ENCODE measurements at regions of chr6 and their contacts with region 1.

Region 1: GRCh38 chr6:28136585-28137504 is 4.8 kb upstream of the ZKSCAN8 start:
- DNase-seq: peak; percentile 90
- H3K4me3 ChIP-seq: peak overlapping the region; percentile 54 to 95 (median 90)
- H3K27ac ChIP-seq: peak overlapping the region; percentile 93
- H3K4me1 ChIP-seq: peaks cover 25% of the 10 kb centered on the region
- H3K27me3 ChIP-seq: no peaks in the 10 kb centered on the region
- CTCF ChIP-seq: no peak
- POLR2A ChIP-seq: peak; percentile 65

Region 2: GRCh38 chr6:27879837-27880236 is 257.0 kb before region 1 on chr6:
- CTCF ChIA-PET with region 1: no interaction called
- POLR2A ChIA-PET with region 1: no interaction called
- dilution Hi-C with region 1: no loop called
- intact Hi-C with region 1: no loop called
- DNase-seq: no peak
- H3K4me3 ChIP-seq: no peak overlapping the region
- H3K27ac ChIP-seq: no peak overlapping the region
- H3K4me1 ChIP-seq: no peaks in the 10 kb centered on the region
- H3K27me3 ChIP-seq: no peaks in the 10 kb centered on the region
- CTCF ChIP-seq: no peak
- POLR2A ChIP-seq: no peak

Region 3: GRCh38 chr6:27902335-27903314 is 234.2 kb before region 1 on chr6:
- CTCF ChIA-PET with region 1: no interaction called
- POLR2A ChIA-PET with region 1: no interaction called
- dilution Hi-C with region 1: no loop called
- intact Hi-C with region 1: loop called (anchors 2 kb)
- DNase-seq: peak; percentile 92
- H3K4me3 ChIP-seq: peak overlapping the region; percentile 39 to 91 (median 86)
- H3K27ac ChIP-seq: peak overlapping the region; percentile 37
- H3K4me1 ChIP-seq: no peaks in the 10 kb centered on the region
- H3K27me3 ChIP-seq: peaks cover 0 to 11% of the 10 kb centered on the region in 2 experiments
- CTCF ChIP-seq: no peak
- POLR2A ChIP-seq: no peak

Region 4: DNA sequence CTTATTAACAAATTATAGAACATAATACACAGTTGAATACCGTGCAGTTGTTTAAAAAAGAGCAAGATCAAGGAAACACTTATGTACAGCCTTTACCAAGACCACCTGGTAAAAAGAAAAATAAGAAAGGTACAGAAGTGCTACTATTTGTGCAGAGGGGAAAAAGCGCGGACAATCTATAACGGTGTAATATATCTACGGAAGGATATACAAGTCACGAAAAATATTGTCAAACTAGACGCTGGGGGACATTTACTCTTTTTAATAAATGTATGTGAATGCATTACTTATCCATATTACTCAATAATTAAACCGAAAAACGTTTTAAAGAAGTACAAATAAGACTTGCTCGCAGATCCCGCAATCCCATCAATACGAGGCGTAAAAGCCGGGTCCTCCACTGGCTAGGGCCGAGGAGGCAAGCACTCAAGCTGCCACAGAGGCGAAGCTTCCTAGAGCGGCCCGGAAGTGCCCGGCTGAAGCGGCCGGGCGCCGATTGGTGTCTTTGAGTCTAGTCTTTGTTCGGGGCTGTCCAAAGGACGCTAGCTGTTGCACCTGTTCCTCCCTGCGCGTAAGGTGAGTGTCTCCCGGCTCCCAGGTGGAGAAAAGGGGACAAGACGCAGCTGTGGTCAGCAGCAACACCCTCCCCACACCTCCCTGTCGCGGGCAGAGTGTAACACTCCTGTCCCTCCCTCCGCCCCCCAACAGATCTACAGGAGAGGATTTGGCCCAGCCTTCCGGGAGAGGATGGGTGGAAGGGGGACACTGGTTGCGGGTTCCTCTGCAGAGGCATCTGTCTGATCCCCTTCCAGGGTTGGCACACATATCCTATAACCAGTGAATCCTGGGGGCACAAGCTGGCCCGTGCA is 12.5 kb before region 1 on chr6 and contains the start of gene ZSCAN16:
- CTCF ChIA-PET with region 1: interaction called, 8 read pairs
- POLR2A ChIA-PET with region 1: interaction called, 9 read pairs
- dilution Hi-C with region 1: no loop called
- intact Hi-C with region 1: loop called (anchors 1 kb)
- DNase-seq: peak; percentile 84
- H3K4me3 ChIP-seq: peak within 1 kb of the TSS; percentile 58 to 91 (median 77)
- H3K27ac ChIP-seq: peak within 1 kb of the TSS; percentile 46
- H3K4me1 ChIP-seq: peaks cover 11% of the 10 kb centered on the region
- H3K27me3 ChIP-seq: no peaks in the 10 kb centered on the region
- CTCF ChIP-seq: no peak
- POLR2A ChIP-seq: peak; percentile 92
- total RNA-seq, gene ZSCAN16: 7.7 and 8.9 TPM in 2 replicates

Region 5: DNA sequence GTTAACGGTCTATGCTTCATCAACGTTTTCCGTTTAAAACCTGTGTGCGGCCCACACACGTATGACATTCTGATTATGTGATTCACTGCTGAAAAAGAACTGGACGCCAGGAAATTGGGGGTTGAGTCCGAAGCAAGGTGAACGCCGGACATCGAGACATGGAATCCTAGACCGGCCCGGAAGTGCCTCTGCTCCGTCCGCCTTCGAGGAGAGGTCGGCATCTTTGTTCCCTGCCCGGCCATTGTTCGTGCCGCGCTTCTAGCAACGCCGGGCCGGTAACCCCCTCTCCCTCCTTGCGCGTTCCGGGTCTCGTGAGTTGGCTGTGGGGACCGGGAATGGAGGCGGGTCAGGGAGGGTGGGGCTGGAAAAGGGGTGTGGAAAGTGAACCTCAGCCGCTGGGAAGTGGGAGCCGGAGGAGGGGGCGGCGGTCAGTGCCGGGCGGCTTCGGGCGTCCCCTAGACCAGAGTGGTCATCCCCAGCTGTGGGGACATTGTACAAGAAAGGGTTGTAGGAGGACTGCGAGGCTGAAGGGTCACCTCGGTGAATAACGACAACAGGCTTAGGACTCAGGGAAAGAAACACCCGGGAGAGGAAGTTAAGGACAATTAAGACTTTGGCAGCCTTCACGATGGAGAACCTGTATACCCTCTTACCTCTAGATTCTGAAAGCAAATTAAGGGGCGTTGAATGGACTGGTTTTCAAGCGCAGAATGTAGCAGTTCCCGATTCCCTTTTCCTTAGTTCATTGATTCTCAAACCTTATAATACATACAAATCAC is 88.4 kb after region 1 on chr6 and contains the start of gene ZSCAN9:
- CTCF ChIA-PET with region 1: interaction called, 4 read pairs
- POLR2A ChIA-PET with region 1: interaction called, 3 read pairs
- dilution Hi-C with region 1: no loop called
- intact Hi-C with region 1: loop called (anchors 1 kb)
- DNase-seq: peak; percentile 89
- H3K4me3 ChIP-seq: peak within 1 kb of the TSS; percentile 48 to 99 (median 86)
- H3K27ac ChIP-seq: peak within 1 kb of the TSS; percentile 77
- H3K4me1 ChIP-seq: peaks cover 10% of the 10 kb centered on the region
- H3K27me3 ChIP-seq: no peaks in the 10 kb centered on the region
- CTCF ChIP-seq: no peak
- POLR2A ChIP-seq: peak; percentile 82
- total RNA-seq, gene ZSCAN9: 18.0 and 18.6 TPM in 2 replicates

Region 6: GRCh38 chr6:28281288-28282064 is 144.6 kb after region 1 on chr6 and contains the start of gene PGBD1:
- CTCF ChIA-PET with region 1: interaction called, 4 read pairs
- POLR2A ChIA-PET with region 1: no interaction called
- dilution Hi-C with region 1: no loop called
- intact Hi-C with region 1: loop called (anchors 1 kb)
- DNase-seq: peak; percentile 77
- H3K4me3 ChIP-seq: peak within 1 kb of the TSS; percentile 68 to 96 (median 93)
- H3K27ac ChIP-seq: peak within 1 kb of the TSS; percentile 46
- H3K4me1 ChIP-seq: peaks cover 7% of the 10 kb centered on the region
- H3K27me3 ChIP-seq: no peaks in the 10 kb centered on the region
- CTCF ChIP-seq: no peak
- POLR2A ChIP-seq: peak; percentile 81
- total RNA-seq, gene PGBD1: 9.6 and 10.1 TPM in 2 replicates

Region 7: GRCh38 chr6:28383235-28384142 is 246.6 kb after region 1 on chr6:
- CTCF ChIA-PET with region 1: interaction called, 7 read pairs
- POLR2A ChIA-PET with region 1: interaction called, 3 read pairs
- dilution Hi-C with region 1: no loop called
- intact Hi-C with region 1: loop called (anchors 1 kb)
- DNase-seq: peak; percentile 93
- H3K4me3 ChIP-seq: peak overlapping the region; percentile 37 to 45 (median 42)
- H3K27ac ChIP-seq: peak overlapping the region; percentile 14
- H3K4me1 ChIP-seq: peaks cover 9% of the 10 kb centered on the region
- H3K27me3 ChIP-seq: no peaks in the 10 kb centered on the region
- CTCF ChIP-seq: peak; percentile 54 to 62
- POLR2A ChIP-seq: no peak

Region 8: DNA sequence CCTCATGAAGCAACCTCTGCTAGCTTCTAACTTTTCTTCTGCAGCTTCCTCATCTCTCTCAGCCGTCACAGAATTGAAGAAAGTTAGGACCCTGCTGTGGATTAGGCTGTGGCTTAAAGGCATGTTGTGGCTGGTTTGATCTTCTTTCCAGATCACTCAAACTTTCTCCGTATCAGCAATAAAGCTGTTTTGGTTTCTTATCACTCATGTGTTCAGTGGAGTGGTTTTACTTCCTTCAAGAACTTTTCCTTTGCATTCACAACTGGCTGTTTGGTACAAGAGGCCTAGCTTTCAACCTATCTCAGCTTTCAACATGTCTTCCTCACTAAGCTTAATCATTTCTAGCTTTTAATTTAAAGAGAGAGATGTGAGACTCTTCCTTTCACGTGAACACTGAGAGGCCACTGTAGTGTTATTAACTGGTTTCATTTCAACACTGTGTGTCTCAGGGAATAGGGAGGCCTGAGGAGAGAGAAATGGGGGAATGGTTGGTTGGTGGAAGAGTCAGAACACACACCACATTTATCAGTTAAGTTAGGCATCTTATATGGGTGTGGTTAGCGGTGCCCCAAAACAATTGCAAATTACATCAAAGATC is 289.2 kb after region 1 on chr6:
- CTCF ChIA-PET with region 1: no interaction called
- POLR2A ChIA-PET with region 1: no interaction called
- dilution Hi-C with region 1: no loop called
- intact Hi-C with region 1: no loop called
- DNase-seq: no peak
- H3K4me3 ChIP-seq: no peak overlapping the region
- H3K27ac ChIP-seq: no peak overlapping the region
- H3K4me1 ChIP-seq: no peaks in the 10 kb centered on the region
- H3K27me3 ChIP-seq: peaks cover 0 to 3% of the 10 kb centered on the region in 2 experiments
- CTCF ChIP-seq: no peak
- POLR2A ChIP-seq: no peak

Region 9: GRCh38 chr6:28586962-28587745 is 450.3 kb after region 1 on chr6:
- CTCF ChIA-PET with region 1: no interaction called
- POLR2A ChIA-PET with region 1: no interaction called
- dilution Hi-C with region 1: no loop called
- intact Hi-C with region 1: loop called (anchors 10 kb)
- DNase-seq: no peak
- H3K4me3 ChIP-seq: peak overlapping the region; percentile 6 to 50 (median 25)
- H3K27ac ChIP-seq: no peak overlapping the region
- H3K4me1 ChIP-seq: peaks cover 12% of the 10 kb centered on the region
- H3K27me3 ChIP-seq: peaks cover 22 to 47% of the 10 kb centered on the region in 2 experiments
- CTCF ChIP-seq: no peak
- POLR2A ChIP-seq: no peak

Measured in endothelial cell of umbilical vein (primary cell).